PC-3 (cell line): ENCODE measurements at regions of chr14 and their contacts with region 1.

Region 1: DNA sequence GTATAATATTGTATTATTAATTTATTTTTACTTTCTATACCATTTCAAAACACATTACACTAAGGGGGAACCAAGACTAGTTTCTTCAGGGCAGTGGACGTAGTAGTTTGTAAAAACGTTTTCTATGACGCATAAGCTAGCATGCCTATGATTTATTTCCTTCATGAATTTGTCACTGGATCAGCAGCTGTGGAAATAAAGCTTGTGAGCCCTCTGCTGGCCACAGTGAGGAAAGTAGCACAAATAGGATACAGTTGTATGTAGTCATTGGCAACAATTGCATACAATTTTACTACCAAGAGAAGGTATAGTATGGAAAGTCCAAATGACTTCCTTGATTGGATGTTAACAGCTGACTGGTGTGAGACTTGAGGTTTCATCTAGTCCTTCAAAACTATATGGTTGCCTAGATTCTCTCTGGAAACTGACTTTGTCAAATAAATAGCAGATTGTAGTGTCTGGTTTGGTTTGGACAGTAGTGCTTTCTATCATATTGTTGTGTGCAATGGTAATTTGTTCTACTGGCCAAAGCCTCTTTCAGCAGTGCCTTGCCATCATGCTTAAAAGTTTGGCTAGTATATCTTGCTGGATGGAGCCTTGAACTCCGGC is 24.3 kb upstream of the PLEKHD1 start:
- DNase-seq: peak; percentile 91
- ATAC-seq: peak; percentile 46
- H3K4me3 ChIP-seq: no peak overlapping the region
- H3K27ac ChIP-seq: no peak overlapping the region
- H3K4me1 ChIP-seq: peaks cover 11% of the 10 kb centered on the region
- H3K27me3 ChIP-seq: no peaks in the 10 kb centered on the region
- CTCF ChIP-seq: peak; percentile 94

Region 2: GRCh38 chr14:69424149-69424923 is 35.9 kb before region 1 on chr14:
- CTCF ChIA-PET with region 1: interaction called, 3 read pairs
- POLR2A ChIA-PET with region 1: no interaction called
- intact Hi-C with region 1: loop called (anchors 2 kb)
- DNase-seq: peak; percentile 64
- ATAC-seq: peak; percentile 90
- H3K4me3 ChIP-seq: no peak overlapping the region
- H3K27ac ChIP-seq: peak overlapping the region; percentile 76
- H3K4me1 ChIP-seq: peaks cover 18% of the 10 kb centered on the region
- H3K27me3 ChIP-seq: no peaks in the 10 kb centered on the region
- CTCF ChIP-seq: no peak

Region 3: DNA sequence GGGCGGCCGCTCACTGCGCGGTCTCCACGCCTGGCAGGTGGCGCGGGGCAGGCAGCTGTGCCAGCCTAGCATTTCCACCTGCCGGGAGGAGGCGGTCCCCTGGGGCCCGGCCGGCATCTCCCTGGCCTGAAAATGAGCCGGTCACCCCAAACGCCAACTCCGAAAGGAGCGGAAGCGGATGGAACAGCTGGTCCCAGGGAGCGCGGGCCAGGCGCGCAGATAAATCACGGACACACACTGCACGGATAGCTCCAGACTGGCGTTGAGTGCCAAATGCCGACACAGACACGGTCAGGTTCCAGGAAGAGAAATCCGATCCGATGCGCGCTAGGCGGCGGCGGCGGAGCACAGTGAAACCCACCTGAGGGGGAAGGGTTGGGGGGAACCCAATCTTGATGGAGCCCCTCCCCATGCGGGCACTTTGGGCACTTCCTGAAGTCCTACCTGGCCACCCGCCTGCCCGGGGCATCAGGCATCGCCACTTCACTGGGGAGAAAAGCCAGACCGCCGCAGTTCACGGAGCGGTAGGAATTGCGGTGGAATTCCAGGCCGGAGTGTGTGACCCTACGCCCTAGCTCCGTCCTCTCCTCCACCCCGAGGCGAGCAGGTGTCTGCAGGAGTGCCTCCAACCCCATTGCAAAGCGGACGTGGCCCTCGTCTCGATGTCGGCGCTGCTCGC is 23.7 kb after region 1 on chr14:
- CTCF ChIA-PET with region 1: no interaction called
- POLR2A ChIA-PET with region 1: no interaction called
- intact Hi-C with region 1: no loop called
- DNase-seq: peak; percentile 33
- ATAC-seq: peak; percentile 60
- H3K4me3 ChIP-seq: peak overlapping the region; percentile 67
- H3K27ac ChIP-seq: no peak overlapping the region
- H3K4me1 ChIP-seq: peaks cover 4% of the 10 kb centered on the region; the same call in 1 of the 2 replicates
- H3K27me3 ChIP-seq: peaks cover 52% of the 10 kb centered on the region
- CTCF ChIP-seq: no peak